Ascending aorta (tissue), 2 donors: ENCODE measurements at regions of chr6 and their contacts with region 1.

Region 1: DNA sequence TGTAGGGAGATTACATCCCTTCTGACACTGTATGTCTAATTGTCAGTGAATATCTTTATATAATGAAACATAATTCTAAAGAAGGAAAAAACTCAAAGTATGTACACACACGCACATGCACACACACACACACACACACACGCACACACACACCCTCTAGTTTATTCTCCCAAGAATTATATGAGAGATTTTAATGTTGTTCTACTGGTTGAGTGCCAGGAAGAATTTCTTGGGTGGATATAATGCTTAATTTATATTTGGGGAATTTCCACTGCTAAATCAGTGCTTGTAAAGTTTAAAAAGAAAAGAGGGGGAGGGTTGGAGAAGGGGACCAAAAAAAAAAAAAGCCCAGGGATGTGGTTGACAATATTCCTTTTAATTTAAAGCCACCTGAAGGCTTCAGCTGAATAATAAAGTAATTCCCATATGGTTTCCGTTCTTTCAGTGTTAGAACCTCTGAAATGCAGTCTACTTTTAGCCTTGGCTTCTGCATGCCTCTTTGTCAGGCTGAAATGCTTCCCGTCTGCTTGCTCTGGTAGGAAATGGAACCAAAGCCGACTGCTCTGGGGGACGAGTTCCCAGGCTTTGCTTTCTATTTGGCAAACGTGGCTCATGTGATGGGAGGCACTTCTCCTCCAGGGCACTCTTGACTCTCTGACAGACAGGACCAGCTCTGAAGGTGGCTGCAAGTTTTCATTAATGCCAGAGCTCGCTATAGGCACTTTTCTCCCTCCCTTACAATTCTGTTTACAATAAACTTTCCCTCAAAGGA is 225.4 kb downstream of the PRL start:
- DNase-seq: peak; percentile 23 to 73
- H3K4me3 ChIP-seq: peak overlapping the region in 1 of 2 donors; percentile 53
- H3K27ac ChIP-seq: peak overlapping the region; percentile 79 to 80
- H3K4me1 ChIP-seq: peaks cover 5 to 10% of the 10 kb centered on the region in 2 donors
- H3K27me3 ChIP-seq: no peaks in the 10 kb centered on the region
- CTCF ChIP-seq: no peak

Region 2: GRCh38 chr6:21946298-21946783 is 125.1 kb before region 1 on chr6:
- intact Hi-C with region 1: no loop called
- DNase-seq: no peak
- H3K4me3 ChIP-seq: no peak overlapping the region
- H3K27ac ChIP-seq: peak overlapping the region; percentile 28 to 51
- H3K4me1 ChIP-seq: peaks cover 0 to 15% of the 10 kb centered on the region in 2 donors
- H3K27me3 ChIP-seq: no peaks in the 10 kb centered on the region
- CTCF ChIP-seq: no peak

Region 3: GRCh38 chr6:22173311-22173710 is 101.9 kb after region 1 on chr6:
- intact Hi-C with region 1: no loop called
- DNase-seq: no peak
- H3K4me3 ChIP-seq: no peak overlapping the region
- H3K27ac ChIP-seq: no peak overlapping the region
- H3K4me1 ChIP-seq: no peaks in the 10 kb centered on the region
- H3K27me3 ChIP-seq: no peaks in the 10 kb centered on the region
- CTCF ChIP-seq: no peak

Region 4: GRCh38 chr6:22774129-22774528 is 702.7 kb after region 1 on chr6:
- intact Hi-C with region 1: no loop called
- DNase-seq: no peak
- H3K4me3 ChIP-seq: no peak overlapping the region
- H3K27ac ChIP-seq: no peak overlapping the region
- H3K4me1 ChIP-seq: no peaks in the 10 kb centered on the region
- H3K27me3 ChIP-seq: no peaks in the 10 kb centered on the region
- CTCF ChIP-seq: no peak

Region 5: GRCh38 chr6:22828179-22829062 is 757.0 kb after region 1 on chr6:
- intact Hi-C with region 1: loop called (anchors 10 kb)
- DNase-seq: peak in 1 of 2 donors; percentile 71
- H3K4me3 ChIP-seq: peak overlapping the region in 1 of 2 donors; percentile 19
- H3K27ac ChIP-seq: peak overlapping the region; percentile 73 to 87
- H3K4me1 ChIP-seq: peaks cover 0 to 18% of the 10 kb centered on the region in 2 donors
- H3K27me3 ChIP-seq: no peaks in the 10 kb centered on the region
- CTCF ChIP-seq: peak; percentile 60 to 69 (median 68)